ENCODE measurements at regions of chr2 and their contacts with region 1.

Region 1: GRCh38 chr2:1496210-1496821 is 83.1 kb downstream of the TPO start:
- DNase-seq: no peak
- H3K27ac ChIP-seq: no peak overlapping the region
- CTCF ChIP-seq: no peak

Region 2: DNA sequence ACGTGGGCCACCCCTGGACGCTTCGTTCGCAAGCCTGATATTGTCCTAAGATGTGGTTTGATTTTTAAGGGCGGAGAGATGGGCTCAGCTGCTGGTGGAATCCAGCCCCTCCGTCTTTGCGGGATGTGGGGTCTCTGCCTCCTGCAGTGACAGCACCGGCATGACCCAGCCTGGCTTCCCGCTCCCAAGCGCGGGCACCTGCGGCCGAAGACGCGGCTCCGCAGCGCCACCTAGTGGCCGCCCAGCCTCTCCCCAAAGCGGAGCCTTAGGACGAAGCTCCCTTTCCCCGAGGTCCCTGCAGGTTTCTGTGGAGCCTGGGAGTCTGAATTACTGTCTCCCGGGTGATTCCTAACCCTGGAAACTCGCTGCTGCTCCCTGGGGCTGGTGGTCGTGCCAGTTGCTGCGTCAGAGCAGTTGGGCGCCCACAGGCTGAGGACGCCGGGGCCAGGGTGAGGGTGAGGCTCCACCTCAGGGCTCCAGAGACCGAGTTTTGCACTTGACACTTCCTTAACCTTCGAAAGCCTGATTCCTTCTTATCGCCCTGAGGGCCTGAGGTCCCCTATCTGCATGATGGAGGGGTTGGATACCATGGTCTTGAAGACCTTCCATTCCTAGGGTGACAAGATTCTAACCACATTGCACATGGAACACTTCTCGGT is 54.5 kb after region 1 on chr2:
- CTCF ChIA-PET with region 1: interaction called, 12 read pairs
- POLR2A ChIA-PET with region 1: no interaction called
- DNase-seq: peak; percentile 74
- H3K27ac ChIP-seq: no peak overlapping the region
- CTCF ChIP-seq: peak; percentile 96

Measured in RWPE1 (cell line).